IMR-90 (cell line): ENCODE measurements at regions of chrX and their contacts with region 1.

Region 1: DNA sequence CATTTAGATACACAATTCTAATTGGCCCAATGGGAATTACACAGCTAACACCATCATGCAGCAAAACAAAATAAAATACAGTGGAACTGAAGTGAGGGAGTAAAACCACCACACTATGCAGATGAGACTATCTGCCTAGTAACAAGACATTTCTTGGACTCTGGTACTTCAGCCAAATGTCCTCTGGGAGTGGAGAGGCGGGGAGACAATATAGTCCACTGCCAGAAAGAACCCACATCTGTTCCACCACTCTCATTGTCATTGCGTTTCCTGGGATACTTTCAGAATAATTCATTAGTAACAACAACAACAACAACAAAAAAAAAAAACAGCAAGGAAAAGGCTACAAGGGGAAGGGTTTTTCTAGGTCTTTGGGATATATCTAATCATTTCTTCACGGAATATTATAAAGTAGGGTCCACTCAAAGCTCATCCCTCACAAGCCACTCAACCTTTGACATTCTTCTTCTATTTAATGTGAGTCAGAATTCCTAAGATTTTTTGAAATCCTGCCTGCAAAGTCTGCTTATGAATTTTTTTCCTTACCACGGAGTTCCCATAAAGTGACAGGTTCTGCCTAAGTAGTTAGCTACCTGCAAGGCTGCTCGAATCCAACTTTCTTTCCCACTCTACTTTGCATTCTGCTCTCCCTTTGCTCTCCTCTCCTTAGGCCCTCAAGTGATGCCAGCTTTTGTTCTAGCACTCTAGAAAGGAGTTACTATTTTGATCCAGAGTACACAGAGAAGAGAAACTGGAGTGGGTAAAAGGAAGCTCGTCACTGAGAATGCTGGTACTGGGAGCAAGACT is 254.6 kb downstream of the CHIC1 start:
- DNase-seq: no peak
- ATAC-seq: peak; percentile 14
- H3K4me3 ChIP-seq: no peak overlapping the region
- H3K27ac ChIP-seq: no peak overlapping the region
- H3K4me1 ChIP-seq: no peaks in the 10 kb centered on the region
- H3K27me3 ChIP-seq: no peaks in the 10 kb centered on the region
- CTCF ChIP-seq: no peak
- POLR2A ChIP-seq: no peak
- RAD21 ChIP-seq: no peak

Region 2: GRCh38 chrX:73457306-73457705 is 360.3 kb before region 1 on chrX:
- CTCF ChIA-PET with region 1: no interaction called
- POLR2A ChIA-PET with region 1: no interaction called
- dilution Hi-C with region 1: no loop called
- in situ Hi-C with region 1: no loop called
- intact Hi-C with region 1: no loop called
- DNase-seq: no peak
- ATAC-seq: no peak
- H3K4me3 ChIP-seq: no peak overlapping the region
- H3K27ac ChIP-seq: no peak overlapping the region
- H3K4me1 ChIP-seq: no peaks in the 10 kb centered on the region
- H3K27me3 ChIP-seq: peaks cover 3% of the 10 kb centered on the region
- CTCF ChIP-seq: no peak
- POLR2A ChIP-seq: no peak
- RAD21 ChIP-seq: no peak

Region 3: GRCh38 chrX:73758250-73758649 is 59.3 kb before region 1 on chrX:
- CTCF ChIA-PET with region 1: no interaction called
- POLR2A ChIA-PET with region 1: no interaction called
- dilution Hi-C with region 1: no loop called
- in situ Hi-C with region 1: no loop called
- intact Hi-C with region 1: loop called (anchors 10 kb)
- DNase-seq: no peak
- ATAC-seq: no peak
- H3K4me3 ChIP-seq: no peak overlapping the region
- H3K27ac ChIP-seq: no peak overlapping the region
- H3K4me1 ChIP-seq: no peaks in the 10 kb centered on the region
- H3K27me3 ChIP-seq: no peaks in the 10 kb centered on the region; the same call in none of the 2 replicates
- CTCF ChIP-seq: no peak
- POLR2A ChIP-seq: no peak
- RAD21 ChIP-seq: no peak

Region 4: DNA sequence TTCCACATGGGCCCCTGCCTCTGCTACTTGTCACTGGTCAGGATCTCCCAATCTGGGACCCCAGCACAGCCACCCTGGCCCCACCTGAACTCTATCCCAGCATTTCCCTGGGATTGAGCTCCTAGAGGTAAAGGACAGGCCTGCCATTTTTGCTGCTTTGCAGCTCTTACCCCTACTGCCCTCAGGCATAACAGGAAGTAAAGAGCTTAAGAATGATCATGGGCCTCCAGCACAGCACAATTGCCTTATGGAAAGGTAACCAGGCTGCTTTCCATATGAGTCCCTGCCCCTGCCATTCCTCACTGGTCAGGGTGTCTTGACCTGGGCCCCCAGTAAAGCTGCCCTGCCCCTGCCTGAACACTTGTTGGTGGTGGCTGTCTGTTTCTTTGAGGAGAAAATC is 231.5 kb after region 1 on chrX:
- CTCF ChIA-PET with region 1: no interaction called
- POLR2A ChIA-PET with region 1: no interaction called
- dilution Hi-C with region 1: no loop called
- in situ Hi-C with region 1: no loop called
- intact Hi-C with region 1: no loop called
- DNase-seq: no peak
- ATAC-seq: no peak
- H3K4me3 ChIP-seq: no peak overlapping the region
- H3K27ac ChIP-seq: no peak overlapping the region
- H3K4me1 ChIP-seq: no peaks in the 10 kb centered on the region
- H3K27me3 ChIP-seq: peaks cover 4% of the 10 kb centered on the region
- CTCF ChIP-seq: no peak
- POLR2A ChIP-seq: no peak
- RAD21 ChIP-seq: no peak